Activated CD8-positive, alpha-beta T cell treated with anti-CD3 and anti-CD28 coated beads for 36 hours (primary cell): ENCODE measurements at regions of chr13 and their contacts with region 1.

Region 1: DNA sequence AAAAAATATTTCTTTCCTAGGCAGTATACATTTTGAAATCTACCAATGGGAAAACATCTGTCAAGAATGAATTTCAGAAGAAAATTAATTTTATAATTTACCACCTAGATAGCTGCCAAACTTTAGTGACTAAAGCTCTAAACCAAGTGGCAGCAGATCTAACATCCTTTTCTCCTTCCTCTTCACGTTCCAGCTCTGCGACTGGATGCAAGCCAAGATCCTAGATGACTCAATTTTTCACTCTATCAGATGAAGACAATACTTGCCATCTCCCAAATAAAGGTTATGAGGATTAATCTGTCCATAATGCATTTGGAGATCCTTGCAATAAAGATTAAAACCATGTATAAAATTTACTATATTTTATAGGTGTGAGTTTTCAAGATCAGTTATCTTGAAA is 66.7 kb upstream of the MIR17HG start:
- DNase-seq: no peak
- ATAC-seq: no peak
- H3K4me3 Mint-ChIP-seq: no peak overlapping the region
- H3K27ac Mint-ChIP-seq: no peak overlapping the region
- H3K4me1 Mint-ChIP-seq: no peaks in the 10 kb centered on the region
- H3K27me3 Mint-ChIP-seq: peaks cover 3% of the 10 kb centered on the region
- CTCF ChIP-seq: no peak

Region 2: GRCh38 chr13:91228940-91229339 is 51.9 kb before region 1 on chr13:
- CTCF ChIA-PET with region 1: no interaction called
- POLR2A ChIA-PET with region 1: no interaction called
- intact Hi-C with region 1: loop called (anchors 10 kb)
- DNase-seq: no peak
- ATAC-seq: no peak
- H3K4me3 Mint-ChIP-seq: no peak overlapping the region
- H3K27ac Mint-ChIP-seq: no peak overlapping the region
- H3K4me1 Mint-ChIP-seq: no peaks in the 10 kb centered on the region
- H3K27me3 Mint-ChIP-seq: peaks cover 4% of the 10 kb centered on the region
- CTCF ChIP-seq: no peak